ENCODE measurements at regions of chr19 and their contacts with region 1.

Region 1: GRCh38 chr19:14031719-14032480 is at the start of gene IL27RA:
- DNase-seq: peak; percentile 31 to 84
- H3K4me3 ChIP-seq: peak within 1 kb of the TSS; percentile 58 to 78 (median 68)
- H3K27ac ChIP-seq: no peak within 1 kb of the TSS
- H3K4me1 ChIP-seq: peaks cover 0 to 9% (median 3%) of the 10 kb centered on the region in 4 experiments; a peak in 6 of 7 replicates
- H3K27me3 ChIP-seq: peaks cover 0 to 12% (median 9%) of the 10 kb centered on the region in 4 experiments; a peak in 5 of 7 replicates
- CTCF ChIP-seq: peak; percentile 76 to 82 (median 78)
- EP300 ChIP-seq: no peak
- POLR2A ChIP-seq: no peak
- RAD21 ChIP-seq: peak; percentile 58 to 68
- total RNA-seq, gene IL27RA: 14.7 and 15.1 TPM in 2 replicates

Region 2: GRCh38 chr19:14081325-14082093 is 49.6 kb after region 1 on chr19:
- CTCF ChIA-PET with region 1: interaction called, 10 read pairs
- POLR2A ChIA-PET with region 1: interaction called, 3 read pairs
- DNase-seq: peak; percentile 97 to 100
- H3K4me3 ChIP-seq: peak overlapping the region; percentile 63 to 77 (median 70)
- H3K27ac ChIP-seq: no peak overlapping the region
- H3K4me1 ChIP-seq: peaks cover 0 to 3% (median 0%) of the 10 kb centered on the region in 4 experiments; a peak in 1 of 7 replicates
- H3K27me3 ChIP-seq: peaks cover 0 to 4% (median 0%) of the 10 kb centered on the region in 4 experiments; a peak in 3 of 7 replicates
- CTCF ChIP-seq: no peak
- EP300 ChIP-seq: no peak
- POLR2A ChIP-seq: no peak
- RAD21 ChIP-seq: no peak

Region 3: DNA sequence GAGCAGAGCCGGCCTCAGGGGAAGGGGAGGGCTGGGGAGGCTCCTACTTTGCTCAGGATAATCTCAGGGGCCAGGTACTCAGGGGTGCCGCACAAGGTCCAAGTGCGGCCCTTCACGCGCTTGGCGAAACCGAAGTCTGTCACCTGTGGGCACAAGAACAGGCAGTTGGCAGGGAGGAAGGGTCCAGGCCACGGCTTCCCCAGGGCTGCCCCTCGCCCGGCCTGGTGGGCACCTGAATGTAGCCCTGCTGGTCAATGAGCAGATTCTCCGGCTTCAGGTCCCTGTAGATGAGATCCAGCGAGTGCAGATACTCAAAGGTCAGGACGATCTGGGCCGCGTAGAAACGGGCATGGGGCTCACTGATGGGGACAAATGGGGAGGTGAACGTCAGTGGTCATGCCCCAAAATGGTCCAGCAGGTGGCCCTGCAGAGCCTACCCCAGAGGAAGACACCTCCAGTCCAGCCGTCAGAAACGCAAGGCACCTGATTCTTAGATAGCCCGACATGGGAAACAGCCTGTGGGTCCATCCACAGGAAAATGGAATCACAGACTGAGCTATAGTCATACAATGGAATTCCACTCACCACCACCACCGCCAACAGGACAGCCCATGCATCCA is 65.7 kb after region 1 on chr19:
- CTCF ChIA-PET with region 1: no interaction called
- POLR2A ChIA-PET with region 1: no interaction called
- DNase-seq: no peak
- H3K4me3 ChIP-seq: no peak overlapping the region
- H3K27ac ChIP-seq: no peak overlapping the region
- H3K4me1 ChIP-seq: peaks cover 0 to under 1% (median 0%) of the 10 kb centered on the region in 4 experiments; a peak in 1 of 7 replicates
- H3K27me3 ChIP-seq: no peaks in the 10 kb centered on the region; a peak in 2 of 7 replicates
- CTCF ChIP-seq: peak; percentile 57 to 64 (median 62)
- EP300 ChIP-seq: no peak
- POLR2A ChIP-seq: no peak
- RAD21 ChIP-seq: peak; percentile 50 to 65

Region 4: GRCh38 chr19:14147797-14148605 is 116.1 kb after region 1 on chr19:
- CTCF ChIA-PET with region 1: no interaction called
- POLR2A ChIA-PET with region 1: no interaction called
- DNase-seq: peak in 1 of 2 experiments; percentile 73
- H3K4me3 ChIP-seq: no peak overlapping the region
- H3K27ac ChIP-seq: 0 out of 2 replicates have a peak overlapping the region, but pooled peaks have one; percentile 1
- H3K4me1 ChIP-seq: peaks cover 0 to 21% (median 15%) of the 10 kb centered on the region in 4 experiments; a peak in 6 of 7 replicates
- H3K27me3 ChIP-seq: no peaks in the 10 kb centered on the region; a peak in 1 of 7 replicates
- CTCF ChIP-seq: peak; percentile 43 to 52 (median 47); a peak in 3 of 4 replicates
- EP300 ChIP-seq: no peak
- POLR2A ChIP-seq: peak in 1 of 2 experiments; percentile 68; a peak in 1 of 3 replicates
- RAD21 ChIP-seq: peak; percentile 44 to 56